ENCODE measurements at regions of chr17 and their contacts with region 1.

Region 1: GRCh38 chr17:15892731-15893657 is 51.9 kb upstream of the ADORA2B start:
- DNase-seq: peak; percentile 74 to 92
- H3K4me3 ChIP-seq: peak overlapping the region; percentile 44; the same call in 1 of the 2 replicates
- H3K27ac ChIP-seq: peak overlapping the region; percentile 99
- H3K4me1 ChIP-seq: peaks cover 61% of the 10 kb centered on the region
- H3K27me3 ChIP-seq: no peaks in the 10 kb centered on the region
- CTCF ChIP-seq: no peak

Region 2: DNA sequence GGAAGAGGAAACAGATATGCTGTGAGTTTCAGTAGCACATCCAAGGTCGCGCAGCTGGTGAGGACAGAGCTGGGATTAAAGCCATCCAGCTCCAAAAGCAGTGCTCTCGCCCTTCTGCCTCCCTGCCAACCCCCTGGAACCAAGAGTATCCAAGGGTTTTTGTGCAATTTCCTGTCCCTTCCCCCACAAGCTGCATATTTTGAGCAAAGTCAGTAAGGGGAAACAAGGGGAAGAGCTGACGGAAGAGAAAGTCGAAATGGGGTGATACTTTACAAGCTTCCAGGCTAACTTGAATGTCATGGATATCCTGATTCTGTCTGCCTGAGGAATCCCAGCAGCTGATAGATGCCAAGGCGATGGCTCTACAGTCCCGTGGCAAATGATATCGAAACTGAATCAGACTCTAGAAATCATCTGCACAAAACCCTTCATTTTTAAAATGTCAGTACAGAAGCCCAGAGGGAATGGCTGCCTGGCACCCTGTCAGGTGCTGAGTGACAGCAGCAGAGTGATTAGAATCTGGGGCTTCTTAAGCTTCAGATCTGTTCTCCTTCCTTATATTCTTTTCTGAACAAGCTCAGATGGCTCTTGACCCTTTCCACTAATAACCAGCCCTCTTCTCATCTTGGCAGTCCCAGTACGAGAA is 508.7 kb before region 1 on chr17:
- CTCF ChIA-PET with region 1: no interaction called
- POLR2A ChIA-PET with region 1: no interaction called
- intact Hi-C with region 1: no loop called
- DNase-seq: no peak
- H3K4me3 ChIP-seq: no peak overlapping the region
- H3K27ac ChIP-seq: no peak overlapping the region
- H3K4me1 ChIP-seq: no peaks in the 10 kb centered on the region
- H3K27me3 ChIP-seq: peaks cover 57% of the 10 kb centered on the region
- CTCF ChIP-seq: no peak

Region 3: GRCh38 chr17:15651583-15652110 is 241.3 kb before region 1 on chr17:
- CTCF ChIA-PET with region 1: no interaction called
- POLR2A ChIA-PET with region 1: interaction called, 3 read pairs
- intact Hi-C with region 1: loop called (anchors 2 kb)
- DNase-seq: peak; percentile 96 to 97
- H3K4me3 ChIP-seq: peak overlapping the region; percentile 88
- H3K27ac ChIP-seq: peak overlapping the region; percentile 97
- H3K4me1 ChIP-seq: peaks cover 41% of the 10 kb centered on the region
- H3K27me3 ChIP-seq: no peaks in the 10 kb centered on the region
- CTCF ChIP-seq: no peak

Region 4: GRCh38 chr17:15740551-15741120 is 152.4 kb before region 1 on chr17:
- CTCF ChIA-PET with region 1: no interaction called
- POLR2A ChIA-PET with region 1: no interaction called
- intact Hi-C with region 1: no loop called
- DNase-seq: no peak
- H3K4me3 ChIP-seq: no peak overlapping the region
- H3K27ac ChIP-seq: no peak overlapping the region
- H3K4me1 ChIP-seq: no peaks in the 10 kb centered on the region
- H3K27me3 ChIP-seq: no peaks in the 10 kb centered on the region
- CTCF ChIP-seq: no peak

Region 5: DNA sequence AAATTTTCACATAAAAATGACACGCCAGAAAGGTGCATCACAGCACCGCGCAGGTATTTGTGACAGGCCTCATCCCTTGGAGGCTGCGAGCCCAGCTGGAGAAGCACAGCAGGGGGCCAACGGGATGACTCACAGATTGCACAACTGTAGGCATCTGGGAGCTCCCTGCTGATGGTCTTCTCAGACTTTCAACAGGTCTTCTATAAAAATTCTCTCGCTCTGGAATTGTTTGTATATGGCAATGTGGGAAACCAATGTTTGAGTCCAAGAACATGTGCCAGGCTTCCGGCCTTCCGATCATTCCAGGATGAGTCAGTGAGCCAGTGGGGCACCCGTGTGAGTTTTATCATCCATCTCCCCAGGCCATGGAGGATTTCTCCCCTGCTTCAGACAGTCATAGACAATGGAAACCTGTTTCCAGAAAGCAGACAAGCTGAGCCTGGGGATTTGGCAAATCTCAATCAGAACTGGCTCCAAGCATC is 27.8 kb after region 1 on chr17:
- CTCF ChIA-PET with region 1: interaction called, 7 read pairs
- POLR2A ChIA-PET with region 1: no interaction called
- intact Hi-C with region 1: loop called (anchors 1 kb)
- DNase-seq: peak; percentile 96
- H3K4me3 ChIP-seq: no peak overlapping the region
- H3K27ac ChIP-seq: peak overlapping the region; percentile 95
- H3K4me1 ChIP-seq: peaks cover 41% of the 10 kb centered on the region
- H3K27me3 ChIP-seq: no peaks in the 10 kb centered on the region
- CTCF ChIP-seq: no peak

Region 6: DNA sequence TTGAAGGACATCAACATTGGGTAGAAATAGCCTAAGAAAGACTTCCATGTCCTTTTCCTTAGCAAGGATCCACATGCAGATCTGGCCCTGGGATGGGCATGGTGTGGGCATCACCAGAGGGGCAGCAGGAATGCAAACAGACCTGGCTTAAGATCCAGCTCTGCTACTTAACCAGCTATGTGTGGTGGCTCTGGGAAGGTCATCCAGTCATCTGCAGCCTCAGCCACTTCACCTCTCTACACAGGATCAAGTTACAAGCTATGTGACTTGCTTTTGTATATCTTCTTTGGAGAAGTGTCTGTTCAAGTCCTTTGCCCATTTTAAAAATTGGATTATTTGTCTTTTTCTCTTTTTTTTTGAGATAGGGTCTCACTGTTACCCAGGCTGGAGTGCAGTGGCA is 38.4 kb after region 1 on chr17:
- CTCF ChIA-PET with region 1: no interaction called
- POLR2A ChIA-PET with region 1: no interaction called
- intact Hi-C with region 1: no loop called
- DNase-seq: peak in 1 of 2 experiments; percentile 32
- H3K4me3 ChIP-seq: no peak overlapping the region
- H3K27ac ChIP-seq: no peak overlapping the region
- H3K4me1 ChIP-seq: peaks cover 7% of the 10 kb centered on the region; the same call in 1 of the 2 replicates
- H3K27me3 ChIP-seq: no peaks in the 10 kb centered on the region
- CTCF ChIP-seq: no peak

Region 7: GRCh38 chr17:15954222-15954621 is 61.2 kb after region 1 on chr17:
- CTCF ChIA-PET with region 1: no interaction called
- POLR2A ChIA-PET with region 1: interaction called, 13 read pairs
- intact Hi-C with region 1: loop called (anchors 1 kb)
- DNase-seq: peak; percentile 81 to 91
- H3K4me3 ChIP-seq: no peak overlapping the region
- H3K27ac ChIP-seq: peak overlapping the region; percentile 71
- H3K4me1 ChIP-seq: peaks cover 48% of the 10 kb centered on the region
- H3K27me3 ChIP-seq: no peaks in the 10 kb centered on the region
- CTCF ChIP-seq: no peak

Region 8: GRCh38 chr17:15999439-16000350 is 106.7 kb after region 1 on chr17 and contains the starts of genes TTC19 and ZSWIM7:
- CTCF ChIA-PET with region 1: no interaction called
- POLR2A ChIA-PET with region 1: no interaction called
- intact Hi-C with region 1: loop called (anchors 1 kb)
- DNase-seq: peak; percentile 85 to 98
- H3K4me3 ChIP-seq: peak within 1 kb of the TSS; percentile 85
- H3K27ac ChIP-seq: peak within 1 kb of the TSS; percentile 97
- H3K4me1 ChIP-seq: peaks cover 21% of the 10 kb centered on the region
- H3K27me3 ChIP-seq: no peaks in the 10 kb centered on the region
- CTCF ChIP-seq: no peak
- total RNA-seq, gene TTC19: 53.5 and 74.7 TPM in 2 replicates
- total RNA-seq, gene ZSWIM7: 13.0 and 19.1 TPM in 2 replicates